ENCODE measurements at regions of chr5 and their contacts with region 1.

Region 1: GRCh38 chr5:18465833-18466591 is 831.8 kb downstream of the TAF11L14 start:
- DNase-seq: peak; percentile 23 to 70 (median 32)
- ATAC-seq: peak; percentile 82
- H3K4me3 ChIP-seq: no peak overlapping the region
- H3K27ac ChIP-seq: no peak overlapping the region
- H3K4me1 ChIP-seq: no peaks in the 10 kb centered on the region
- H3K27me3 ChIP-seq: no peaks in the 10 kb centered on the region
- CTCF ChIP-seq: peak; percentile 49 to 63 (median 59)
- EP300 ChIP-seq: no peak
- POLR2A ChIP-seq: no peak
- RAD21 ChIP-seq: peak; percentile 79 to 92

Region 2: GRCh38 chr5:18292146-18292545 is 173.9 kb before region 1 on chr5:
- CTCF ChIA-PET with region 1: no interaction called
- POLR2A ChIA-PET with region 1: no interaction called
- in situ Hi-C with region 1: no loop called
- intact Hi-C with region 1: no loop called
- DNase-seq: no peak
- ATAC-seq: no peak
- H3K4me3 ChIP-seq: no peak overlapping the region
- H3K27ac ChIP-seq: no peak overlapping the region
- H3K4me1 ChIP-seq: no peaks in the 10 kb centered on the region; a peak in 1 of 5 replicates
- H3K27me3 ChIP-seq: no peaks in the 10 kb centered on the region
- CTCF ChIP-seq: no peak
- EP300 ChIP-seq: no peak
- POLR2A ChIP-seq: no peak
- RAD21 ChIP-seq: no peak

Region 3: GRCh38 chr5:18699681-18700080 is 233.7 kb after region 1 on chr5:
- CTCF ChIA-PET with region 1: no interaction called
- POLR2A ChIA-PET with region 1: no interaction called
- in situ Hi-C with region 1: no loop called
- intact Hi-C with region 1: loop called (anchors 2 kb)
- DNase-seq: no peak
- ATAC-seq: no peak
- H3K4me3 ChIP-seq: no peak overlapping the region
- H3K27ac ChIP-seq: no peak overlapping the region
- H3K4me1 ChIP-seq: no peaks in the 10 kb centered on the region
- H3K27me3 ChIP-seq: no peaks in the 10 kb centered on the region
- CTCF ChIP-seq: no peak
- EP300 ChIP-seq: no peak
- POLR2A ChIP-seq: no peak
- RAD21 ChIP-seq: no peak

Region 4: DNA sequence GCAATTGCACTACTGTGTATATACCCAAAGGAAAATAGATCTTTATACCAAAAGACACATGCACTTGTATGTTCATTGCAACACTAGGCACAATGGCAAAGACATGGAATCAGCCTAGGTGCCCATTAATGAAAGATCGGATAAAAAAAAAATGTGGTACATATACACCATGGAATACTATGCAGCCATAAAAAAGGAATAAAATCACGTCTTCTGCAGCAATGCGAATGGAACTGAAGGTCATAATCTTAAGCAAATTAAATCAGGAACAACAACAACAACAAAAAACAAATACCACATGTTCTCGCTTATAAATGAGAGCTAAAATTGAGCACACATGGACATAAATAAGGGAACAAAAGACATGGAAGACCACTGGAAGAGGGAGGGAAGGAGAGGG is 1788.7 kb after region 1 on chr5:
- CTCF ChIA-PET with region 1: no interaction called
- POLR2A ChIA-PET with region 1: no interaction called
- in situ Hi-C with region 1: no loop called
- intact Hi-C with region 1: loop called (anchors 10 kb)
- DNase-seq: no peak
- ATAC-seq: no peak
- H3K4me3 ChIP-seq: no peak overlapping the region
- H3K27ac ChIP-seq: no peak overlapping the region
- H3K4me1 ChIP-seq: no peaks in the 10 kb centered on the region
- H3K27me3 ChIP-seq: no peaks in the 10 kb centered on the region
- CTCF ChIP-seq: no peak
- EP300 ChIP-seq: no peak
- POLR2A ChIP-seq: no peak
- RAD21 ChIP-seq: no peak